Activated T-helper 1 cell treated with anti-CD3 and anti-CD28 coated beads, Interleukin-12 subunit alpha, Interleukin-12 subunit beta, Interleukin-2, Interleukin-4 antibody, amounts not matched to agents 30 ng/mL and 10 ng/mL and 1 ng/mL, durations not matched to agents 14 hours and 24 hours and 36 hours (primary cell): ENCODE measurements at regions of chr7 and their contacts with region 1.

Region 1: GRCh38 chr7:23431702-23432199 is 38.5 kb downstream of the IGF2BP3 start:
- DNase-seq: no peak
- H3K4me3 Mint-ChIP-seq: no peak overlapping the region
- H3K27ac Mint-ChIP-seq: no peak overlapping the region
- H3K4me1 Mint-ChIP-seq: peaks cover 4% of the 10 kb centered on the region
- H3K27me3 Mint-ChIP-seq: peaks cover 25% of the 10 kb centered on the region

Region 2: GRCh38 chr7:23462846-23463245 is 31.1 kb after region 1 on chr7:
- intact Hi-C with region 1: loop called (anchors 1 kb)
- DNase-seq: no peak
- H3K4me3 Mint-ChIP-seq: no peak overlapping the region
- H3K27ac Mint-ChIP-seq: no peak overlapping the region
- H3K4me1 Mint-ChIP-seq: peaks cover 19% of the 10 kb centered on the region
- H3K27me3 Mint-ChIP-seq: peaks cover 75% of the 10 kb centered on the region